Right ventricle myocardium superior (tissue), 1 donor: ENCODE measurements at regions of chr16 and their contacts with region 1.

Region 1: GRCh38 chr16:12228602-12229499 is 252.3 kb downstream of the SNX29 start:
- DNase-seq: peak; percentile 65
- ATAC-seq: peak; percentile 93

Region 2: GRCh38 chr16:12095275-12096156 is 133.3 kb before region 1 on chr16:
- intact Hi-C with region 1: loop called (anchors 5 kb)
- DNase-seq: peak; percentile 77
- ATAC-seq: peak; percentile 78

Region 3: DNA sequence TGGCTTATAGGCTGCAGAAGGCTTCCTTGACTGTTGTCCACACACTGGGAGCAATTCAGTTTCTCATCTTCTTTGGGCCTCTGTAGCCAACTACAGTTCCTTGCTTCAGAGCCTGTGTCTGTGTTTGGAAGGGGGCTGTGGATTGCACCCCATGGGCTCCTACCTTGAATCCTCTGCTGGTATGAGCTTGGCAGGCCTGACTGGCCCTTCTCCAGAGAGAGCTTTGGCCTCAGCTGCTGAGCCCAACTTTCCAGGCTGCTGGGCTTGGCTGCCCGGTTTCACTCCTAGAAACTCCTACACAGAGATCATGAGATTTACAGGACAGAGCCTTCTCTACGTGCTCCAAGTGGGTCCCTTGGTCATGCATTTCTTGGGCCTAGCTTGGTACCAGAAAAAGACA is 102.1 kb after region 1 on chr16:
- intact Hi-C with region 1: loop called (anchors 10 kb)
- DNase-seq: peak; percentile 67
- ATAC-seq: peak; percentile 82